MCF 10A (cell line): ENCODE measurements at regions of chr14 and their contacts with region 1.

Region 1: DNA sequence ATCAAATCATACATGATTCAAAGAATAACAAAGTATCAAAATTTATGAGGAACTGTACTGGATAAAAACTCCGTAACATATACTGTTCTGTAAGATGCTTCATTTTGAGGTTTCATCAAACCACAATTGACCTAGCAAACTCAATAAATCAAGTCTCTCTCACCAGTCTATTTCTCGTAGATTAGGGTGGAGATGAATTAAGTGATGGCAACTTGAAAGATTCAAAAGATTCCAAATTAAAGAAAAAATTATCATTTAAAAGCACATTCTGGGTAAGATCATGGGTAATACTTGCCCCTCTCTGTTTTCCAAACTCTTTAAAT is 74.4 kb downstream of the PAPLN start:
- DNase-seq: no peak
- H3K4me3 Mint-ChIP-seq: no peak overlapping the region
- H3K27ac Mint-ChIP-seq: peak overlapping the region; percentile 71
- H3K4me1 Mint-ChIP-seq: peaks cover 5% of the 10 kb centered on the region
- H3K27me3 Mint-ChIP-seq: no peaks in the 10 kb centered on the region
- CTCF ChIP-seq: no peak

Region 2: GRCh38 chr14:73269729-73270531 is 41.7 kb before region 1 on chr14:
- CTCF ChIA-PET with region 1: no interaction called
- POLR2A ChIA-PET with region 1: no interaction called
- intact Hi-C with region 1: no loop called
- DNase-seq: no peak
- H3K4me3 Mint-ChIP-seq: no peak overlapping the region
- H3K27ac Mint-ChIP-seq: no peak overlapping the region
- H3K4me1 Mint-ChIP-seq: no peaks in the 10 kb centered on the region
- H3K27me3 Mint-ChIP-seq: no peaks in the 10 kb centered on the region
- CTCF ChIP-seq: no peak

Region 3: DNA sequence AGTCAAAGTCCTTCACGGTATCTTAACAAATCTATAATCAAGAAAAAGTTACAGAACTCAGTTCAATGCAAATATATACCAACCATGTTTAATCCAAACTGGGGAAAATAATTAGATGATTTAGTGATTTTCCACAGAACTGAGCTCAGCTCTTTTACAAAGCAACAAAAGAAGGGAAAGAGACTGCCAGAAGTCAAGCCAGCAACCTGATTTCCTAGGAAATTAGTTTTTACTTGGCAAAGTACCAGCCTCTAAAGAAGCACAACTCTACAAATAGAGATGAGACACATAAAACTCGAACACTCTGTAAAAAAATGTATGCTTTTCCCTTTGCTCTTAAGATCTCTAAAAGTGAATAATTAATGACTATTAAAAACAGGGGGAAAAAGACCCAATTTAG is 127.3 kb after region 1 on chr14:
- CTCF ChIA-PET with region 1: no interaction called
- POLR2A ChIA-PET with region 1: no interaction called
- intact Hi-C with region 1: no loop called
- DNase-seq: no peak
- H3K4me3 Mint-ChIP-seq: no peak overlapping the region
- H3K27ac Mint-ChIP-seq: no peak overlapping the region
- H3K4me1 Mint-ChIP-seq: no peaks in the 10 kb centered on the region
- H3K27me3 Mint-ChIP-seq: no peaks in the 10 kb centered on the region
- CTCF ChIP-seq: no peak

Region 4: GRCh38 chr14:73463411-73463810 is 151.7 kb after region 1 on chr14:
- CTCF ChIA-PET with region 1: no interaction called
- POLR2A ChIA-PET with region 1: interaction called, 4 read pairs
- intact Hi-C with region 1: loop called (anchors 5 kb)
- DNase-seq: peak; percentile 98
- H3K4me3 Mint-ChIP-seq: peak overlapping the region; percentile 28
- H3K27ac Mint-ChIP-seq: peak overlapping the region; percentile 77
- H3K4me1 Mint-ChIP-seq: peaks cover 36% of the 10 kb centered on the region
- H3K27me3 Mint-ChIP-seq: no peaks in the 10 kb centered on the region
- CTCF ChIP-seq: no peak